Cardiac septum (tissue), 1 donor: ENCODE measurements at regions of chr3 and their contacts with region 1.

Region 1: DNA sequence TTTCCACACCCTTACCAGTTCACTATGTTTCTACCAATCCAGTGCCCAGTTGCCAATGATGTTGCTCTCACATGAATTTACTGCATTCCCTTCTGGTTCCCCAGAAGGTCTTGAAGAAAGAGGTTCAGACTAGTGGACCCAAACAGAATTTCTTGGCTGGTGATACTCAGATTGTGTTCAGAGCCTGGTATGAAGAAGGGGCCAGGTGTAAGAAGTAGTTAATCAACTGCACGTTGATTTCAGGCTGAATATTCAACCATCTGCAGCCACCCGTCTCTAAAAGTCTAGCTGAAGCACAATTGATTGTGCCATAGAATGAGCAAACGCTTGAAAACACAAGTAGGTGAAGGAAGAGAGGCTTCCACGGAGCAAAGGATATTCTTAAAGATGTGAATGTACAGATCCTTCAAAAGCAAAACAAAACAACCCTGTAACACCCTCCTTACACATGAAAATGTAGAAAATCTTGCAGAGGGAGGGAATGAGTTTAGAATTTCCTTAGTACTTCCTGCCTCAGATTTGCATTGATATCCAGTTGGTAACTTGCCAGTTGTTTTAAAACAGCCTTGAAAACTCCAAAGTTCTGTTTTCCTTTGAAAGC is 4.7 kb downstream of the RBMS3 start:
- DNase-seq: no peak

Region 2: DNA sequence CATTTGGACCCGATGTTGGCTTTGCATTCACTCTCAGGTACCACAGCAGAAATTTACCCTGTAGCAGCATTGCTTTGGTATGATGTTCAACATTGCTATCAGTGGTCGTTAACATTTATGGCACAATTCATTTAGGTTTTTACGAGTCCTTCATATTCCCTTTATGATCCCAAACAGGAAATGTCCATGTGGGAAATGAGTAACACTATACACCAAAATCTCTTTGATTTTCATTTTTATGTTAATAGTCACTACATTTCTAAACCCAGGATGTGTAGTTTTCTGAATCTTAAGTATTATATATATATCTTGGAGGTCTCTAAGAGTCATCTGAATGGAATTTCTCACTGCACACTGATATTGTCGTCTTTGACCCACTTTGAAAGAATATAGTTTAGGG is 83.2 kb before region 1 on chr3:
- intact Hi-C with region 1: no loop called
- DNase-seq: no peak

Region 3: DNA sequence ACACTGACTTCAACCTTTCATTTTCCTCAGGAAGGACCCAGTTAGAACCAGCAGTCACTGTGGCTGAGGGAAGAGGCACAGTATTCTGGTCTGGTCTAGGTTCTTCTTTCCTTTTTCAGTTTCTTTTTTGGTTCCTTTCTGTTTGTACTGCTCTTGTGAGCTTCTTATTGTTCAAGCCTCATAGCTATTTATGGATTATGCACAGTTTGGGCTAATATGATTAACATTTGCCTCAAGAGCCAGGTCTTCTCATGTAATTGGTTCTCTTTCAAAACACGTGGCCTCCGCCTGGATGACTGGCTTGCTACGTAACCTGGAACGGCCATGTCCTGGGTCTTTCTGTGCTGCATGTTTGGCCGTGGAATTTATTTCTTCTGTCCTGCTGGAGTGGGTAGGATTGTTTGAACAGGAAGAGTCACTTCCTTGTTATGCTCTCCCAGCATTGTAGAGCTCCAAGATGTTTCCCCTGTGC is 38.6 kb after region 1 on chr3:
- intact Hi-C with region 1: loop called (anchors 5 kb)
- DNase-seq: no peak